ENCODE measurements at regions of chr19 and their contacts with region 1.

Region 1: GRCh38 chr19:3565139-3565538 is 7.6 kb upstream of the HMG20B start:
- DNase-seq: no peak
- ATAC-seq: no peak
- H3K4me3 ChIP-seq: no peak overlapping the region
- H3K4me3 Mint-ChIP-seq: no peak overlapping the region
- H3K27ac ChIP-seq: no peak overlapping the region
- H3K27ac Mint-ChIP-seq: no peak overlapping the region
- H3K4me1 ChIP-seq: no peaks in the 10 kb centered on the region
- H3K4me1 Mint-ChIP-seq: no peaks in the 10 kb centered on the region
- H3K27me3 ChIP-seq: no peaks in the 10 kb centered on the region
- H3K27me3 Mint-ChIP-seq: no peaks in the 10 kb centered on the region

Region 2: GRCh38 chr19:4386041-4386782 is 821.1 kb after region 1 on chr19:
- CTCF ChIA-PET with region 1: no interaction called
- POLR2A ChIA-PET with region 1: interaction called in 1 of 2 experiments, 12 read pairs
- DNase-seq: no peak
- ATAC-seq: no peak
- H3K4me3 ChIP-seq: no peak overlapping the region
- H3K4me3 Mint-ChIP-seq: no peak overlapping the region
- H3K27ac ChIP-seq: no peak overlapping the region
- H3K27ac Mint-ChIP-seq: peak overlapping the region in 1 of 2 donors; percentile 46
- H3K4me1 ChIP-seq: peaks cover 7 to 27% of the 10 kb centered on the region in 2 experiments
- H3K4me1 Mint-ChIP-seq: peaks cover 27 to 33% (median 30%) of the 10 kb centered on the region in 3 donors
- H3K27me3 ChIP-seq: no peaks in the 10 kb centered on the region
- H3K27me3 Mint-ChIP-seq: no peaks in the 10 kb centered on the region

Measured in T-cell (primary cell).